ENCODE measurements at regions of chr14 and their contacts with region 1.

Region 1: DNA sequence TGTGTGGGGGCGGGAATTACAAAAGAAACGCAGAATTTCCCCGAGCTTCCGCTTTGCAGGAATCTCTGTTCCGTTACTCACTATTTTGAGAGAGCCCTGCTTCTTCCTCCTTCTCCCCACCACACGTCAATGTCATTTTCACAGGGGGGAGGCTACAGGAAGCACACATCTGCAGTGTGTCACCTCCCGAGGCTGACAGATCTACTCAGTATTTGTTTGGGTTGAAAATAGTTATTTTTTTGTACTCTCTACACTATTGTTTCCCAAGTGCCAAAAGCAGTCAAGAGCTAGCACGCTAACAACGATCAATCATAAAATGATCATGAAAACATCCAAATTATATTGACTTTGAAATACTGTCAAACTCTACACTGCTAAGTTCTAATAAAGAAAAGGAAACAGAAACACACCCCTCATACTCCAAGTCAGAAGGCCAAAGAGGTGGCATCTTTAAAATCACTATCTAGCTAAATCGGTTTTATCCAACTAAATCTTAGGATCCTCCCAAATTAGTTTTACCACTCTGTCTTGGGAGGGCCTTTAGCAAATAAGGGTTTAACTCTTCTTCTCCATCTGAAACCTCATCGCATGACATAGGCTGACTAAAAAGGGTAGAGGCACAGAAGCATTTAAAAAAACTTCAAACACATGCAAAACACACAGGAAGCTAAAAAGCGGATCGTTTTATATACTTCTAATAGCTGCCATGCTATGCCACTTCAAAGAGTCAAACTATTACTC is 51.8 kb downstream of the FOXN3 start:
- DNase-seq: peak; percentile 80
- H3K4me3 Mint-ChIP-seq: peak overlapping the region; percentile 73
- H3K27ac Mint-ChIP-seq: peak overlapping the region; percentile 97
- H3K4me1 Mint-ChIP-seq: peaks cover 66% of the 10 kb centered on the region
- H3K27me3 Mint-ChIP-seq: no peaks in the 10 kb centered on the region

Region 2: DNA sequence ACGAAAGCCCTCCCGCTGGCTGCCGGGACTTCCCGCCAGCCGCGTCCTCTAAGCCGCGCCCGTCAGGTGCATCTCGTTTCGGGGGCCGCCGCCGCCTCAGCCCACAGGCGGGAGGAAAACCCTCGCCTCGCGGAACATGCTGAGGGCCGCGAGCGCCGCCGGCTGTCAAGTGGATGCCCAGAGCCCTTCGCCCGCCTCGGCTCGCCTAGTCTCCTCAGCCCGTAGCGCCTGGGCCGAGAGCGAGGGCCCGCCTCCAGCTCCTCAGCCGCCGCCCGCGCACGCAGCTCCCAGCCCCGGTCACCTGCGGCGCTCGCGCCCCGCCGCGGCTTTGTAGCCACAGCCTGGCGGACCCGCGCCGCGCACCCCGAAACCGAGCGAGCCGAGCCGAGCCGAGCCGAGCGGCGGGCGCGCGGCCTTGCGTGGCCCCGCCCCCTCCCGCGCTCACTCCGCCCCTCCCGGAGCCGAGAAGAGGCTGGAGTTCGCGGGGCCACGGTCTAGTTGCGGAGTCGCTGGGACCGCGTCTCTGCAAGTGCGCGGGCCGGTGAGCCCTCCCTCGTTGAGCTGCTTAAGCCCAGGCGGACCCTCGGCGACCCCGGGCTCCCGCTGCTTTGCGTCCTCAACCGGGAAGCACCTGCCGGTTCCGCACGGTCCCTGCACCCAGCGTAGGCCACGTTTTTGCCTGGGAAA is 572.5 kb before region 1 on chr14 and contains the start of gene EML5:
- CTCF ChIA-PET with region 1: no interaction called
- intact Hi-C with region 1: loop called (anchors 10 kb)
- DNase-seq: peak; percentile 86
- H3K4me3 Mint-ChIP-seq: peak within 1 kb of the TSS; percentile 88
- H3K27ac Mint-ChIP-seq: peak within 1 kb of the TSS; percentile 71
- H3K4me1 Mint-ChIP-seq: peaks cover 18% of the 10 kb centered on the region
- H3K27me3 Mint-ChIP-seq: no peaks in the 10 kb centered on the region
- total RNA-seq, gene EML5: 3.7 to 3.8 TPM

Region 3: DNA sequence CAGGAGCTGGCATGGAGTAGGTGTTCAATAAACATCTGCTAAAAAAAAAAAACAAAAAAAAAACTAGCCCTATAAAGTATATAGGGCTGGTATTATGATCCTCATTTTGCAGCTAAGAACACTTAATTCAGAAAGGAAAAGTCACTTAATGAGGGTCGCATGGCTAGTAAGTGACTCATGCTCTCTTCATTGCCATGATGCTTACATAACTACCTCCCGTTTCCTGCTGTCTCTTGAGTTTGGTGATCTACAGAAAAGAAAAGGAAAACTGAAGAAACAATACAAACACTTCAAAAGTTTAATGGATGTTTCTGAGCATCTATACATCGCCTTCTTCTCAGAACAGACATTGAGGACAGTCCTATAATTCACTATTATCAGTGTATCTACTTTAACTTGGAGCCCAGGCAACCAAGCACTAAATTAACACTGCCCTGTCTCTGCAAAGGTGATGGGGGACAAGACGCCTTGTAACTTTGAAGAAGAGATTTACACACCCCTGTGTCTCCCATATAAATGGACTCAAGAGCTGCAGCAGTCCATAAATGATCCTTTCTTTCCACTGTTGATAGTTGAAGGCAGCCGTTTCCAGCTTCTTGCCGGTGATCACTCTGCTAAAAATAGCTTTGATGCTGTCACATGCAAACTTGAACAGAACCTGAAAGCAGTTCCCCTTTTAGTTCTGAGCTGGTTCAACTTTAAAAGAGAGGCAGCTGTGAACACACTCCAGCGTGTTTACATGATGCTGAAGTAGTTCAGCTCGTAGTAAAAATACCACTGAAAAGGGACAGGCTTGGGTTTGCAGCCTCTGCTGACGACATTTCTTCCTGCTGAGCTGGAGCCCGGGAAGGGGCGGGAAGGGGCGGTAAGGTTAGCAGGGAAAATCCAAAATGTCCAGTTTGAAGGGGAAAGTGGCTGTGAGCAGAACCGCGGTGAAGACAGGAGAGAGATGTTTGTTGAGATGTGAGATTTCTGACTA is 61.5 kb before region 1 on chr14:
- CTCF ChIA-PET with region 1: no interaction called
- intact Hi-C with region 1: loop called (anchors 1 kb)
- DNase-seq: peak; percentile 61
- H3K4me3 Mint-ChIP-seq: peak overlapping the region; percentile 62
- H3K27ac Mint-ChIP-seq: peak overlapping the region; percentile 92
- H3K4me1 Mint-ChIP-seq: peaks cover 67% of the 10 kb centered on the region
- H3K27me3 Mint-ChIP-seq: no peaks in the 10 kb centered on the region

Region 4: DNA sequence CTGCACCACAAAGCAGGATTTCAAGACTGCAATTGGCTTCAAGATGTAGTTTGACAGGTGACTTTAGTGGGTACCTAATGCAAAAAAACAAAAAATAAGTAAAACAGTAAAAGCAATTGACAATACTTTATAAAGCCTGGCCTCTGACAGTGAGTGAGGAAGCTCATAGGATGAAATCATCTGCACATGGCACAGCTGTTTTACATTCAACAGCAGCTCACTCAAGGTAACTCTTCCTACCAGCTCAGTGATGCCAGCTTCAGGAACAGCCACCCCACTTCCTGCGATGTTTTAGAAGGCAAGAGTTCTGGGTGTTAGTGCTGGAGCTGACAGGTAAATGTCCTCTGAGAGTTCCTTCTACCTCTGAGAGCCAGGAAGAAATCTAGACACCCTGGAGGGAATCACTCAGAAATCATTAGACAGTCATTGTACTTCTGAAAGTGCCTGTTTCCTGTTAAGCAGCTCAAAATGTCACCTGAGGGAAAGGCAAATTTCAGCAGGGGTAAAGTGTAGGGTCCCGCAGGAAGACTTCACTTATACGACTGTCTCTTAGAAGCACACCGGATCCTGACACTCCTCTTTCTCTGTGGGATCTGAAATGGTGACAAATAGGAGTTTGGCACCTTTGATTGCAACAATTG is 48.1 kb before region 1 on chr14:
- CTCF ChIA-PET with region 1: no interaction called
- intact Hi-C with region 1: no loop called
- DNase-seq: no peak
- H3K4me3 Mint-ChIP-seq: no peak overlapping the region
- H3K27ac Mint-ChIP-seq: no peak overlapping the region
- H3K4me1 Mint-ChIP-seq: peaks cover 47% of the 10 kb centered on the region
- H3K27me3 Mint-ChIP-seq: no peaks in the 10 kb centered on the region

Region 5: DNA sequence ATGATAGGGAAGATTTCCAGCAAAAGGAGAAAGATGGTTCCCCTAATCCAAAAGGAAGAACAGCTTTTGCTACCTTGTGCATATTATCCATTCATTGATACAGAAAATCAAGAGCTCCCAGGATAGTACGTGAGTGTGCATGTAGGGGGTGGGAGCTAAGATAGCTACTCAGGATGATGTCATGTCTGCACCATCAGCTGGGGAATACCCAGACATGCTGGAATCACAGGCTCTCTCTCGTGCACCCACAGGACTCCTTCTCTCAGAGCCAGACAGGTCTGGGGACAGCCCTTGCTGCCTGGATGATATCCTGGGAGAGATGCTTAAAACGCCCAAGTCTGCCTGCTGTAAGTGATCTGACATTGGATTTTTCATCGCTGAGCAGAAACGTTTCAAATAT is 12.9 kb after region 1 on chr14:
- CTCF ChIA-PET with region 1: interaction called, 4 read pairs
- intact Hi-C with region 1: loop called (anchors 1 kb)
- DNase-seq: peak; percentile 72
- H3K4me3 Mint-ChIP-seq: no peak overlapping the region
- H3K27ac Mint-ChIP-seq: no peak overlapping the region
- H3K4me1 Mint-ChIP-seq: peaks cover 44% of the 10 kb centered on the region
- H3K27me3 Mint-ChIP-seq: no peaks in the 10 kb centered on the region

Region 6: GRCh38 chr14:89416002-89416995 is 51.1 kb after region 1 on chr14:
- CTCF ChIA-PET with region 1: no interaction called
- intact Hi-C with region 1: loop called (anchors 1 kb)
- DNase-seq: peak; percentile 98
- H3K4me3 Mint-ChIP-seq: peak overlapping the region; percentile 83
- H3K27ac Mint-ChIP-seq: peak overlapping the region; percentile 87
- H3K4me1 Mint-ChIP-seq: peaks cover 53% of the 10 kb centered on the region
- H3K27me3 Mint-ChIP-seq: no peaks in the 10 kb centered on the region

Region 7: DNA sequence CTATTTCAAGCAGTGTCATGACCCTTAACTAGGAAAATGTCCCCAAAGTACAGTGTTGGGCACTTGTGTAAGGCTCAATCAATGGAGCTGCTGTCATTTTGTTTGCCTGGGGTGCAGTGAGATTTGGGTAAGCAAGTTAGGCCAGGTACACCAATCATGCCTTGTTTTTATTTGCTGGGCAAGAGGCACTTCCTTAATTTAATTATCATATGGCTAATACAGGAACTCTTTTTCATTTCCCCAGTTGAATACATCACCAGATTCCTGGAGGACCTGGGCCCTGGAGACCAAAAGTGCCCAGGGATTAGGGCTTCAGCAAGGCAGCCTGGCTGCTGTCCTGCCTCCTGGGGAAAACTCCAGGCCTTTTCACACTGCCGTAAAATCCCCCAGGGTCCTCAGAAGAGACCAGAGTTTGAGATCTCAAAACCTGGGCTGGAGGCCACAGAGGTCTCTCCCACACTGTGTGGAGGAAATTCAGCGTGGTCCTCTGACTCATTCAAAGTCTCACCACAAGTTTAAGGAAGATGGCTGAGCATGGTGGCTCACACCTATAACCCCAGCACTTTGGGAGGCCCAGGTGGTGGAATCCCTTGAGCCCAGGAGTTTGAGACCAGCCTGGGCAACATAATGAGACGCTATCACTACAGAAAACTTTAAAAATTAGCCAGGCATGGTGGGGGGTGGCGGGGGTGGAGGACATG is 80.2 kb after region 1 on chr14:
- CTCF ChIA-PET with region 1: no interaction called
- intact Hi-C with region 1: loop called (anchors 1 kb)
- DNase-seq: peak; percentile 65
- H3K4me3 Mint-ChIP-seq: no peak overlapping the region
- H3K27ac Mint-ChIP-seq: peak overlapping the region; percentile 79
- H3K4me1 Mint-ChIP-seq: peaks cover 60% of the 10 kb centered on the region
- H3K27me3 Mint-ChIP-seq: no peaks in the 10 kb centered on the region

Region 8: DNA sequence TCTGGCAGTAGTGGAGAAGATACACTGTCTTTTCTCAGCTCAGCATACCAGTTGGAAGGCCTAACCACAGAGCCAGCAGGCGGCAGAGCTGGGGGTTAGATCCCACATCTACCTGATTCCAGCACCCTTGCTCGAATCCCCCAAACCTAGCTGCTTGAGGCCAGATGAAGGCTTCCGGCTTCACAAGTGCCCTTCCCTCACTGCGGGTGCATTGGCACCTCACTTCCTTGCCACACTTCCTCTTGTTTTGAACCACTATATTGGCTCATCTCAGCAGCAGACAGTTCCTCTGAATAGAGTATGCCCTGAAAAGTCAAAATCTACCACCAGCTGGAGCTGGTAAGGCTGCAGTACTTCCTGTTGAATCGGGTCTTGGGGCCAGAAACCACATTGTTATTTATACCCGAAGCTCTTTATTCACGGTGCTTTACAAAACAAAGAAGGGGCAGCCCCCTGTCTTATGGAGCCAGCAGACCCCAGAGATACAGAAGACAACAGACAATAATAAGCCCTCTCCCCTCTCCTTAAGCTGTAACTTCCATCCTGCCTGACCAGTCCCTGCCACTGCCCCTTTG is 355.6 kb after region 1 on chr14:
- CTCF ChIA-PET with region 1: interaction called, 3 read pairs
- intact Hi-C with region 1: loop called (anchors 5 kb)
- DNase-seq: peak; percentile 76
- H3K4me3 Mint-ChIP-seq: peak overlapping the region; percentile 32
- H3K27ac Mint-ChIP-seq: peak overlapping the region; percentile 95
- H3K4me1 Mint-ChIP-seq: peaks cover 68% of the 10 kb centered on the region
- H3K27me3 Mint-ChIP-seq: no peaks in the 10 kb centered on the region

Measured in activated naive CD4-positive, alpha-beta T cell treated with anti-CD3 and anti-CD28 coated beads for 36 hours (primary cell).